A549 (cell line): ENCODE measurements at regions of chr4 and their contacts with region 1.

Region 1: DNA sequence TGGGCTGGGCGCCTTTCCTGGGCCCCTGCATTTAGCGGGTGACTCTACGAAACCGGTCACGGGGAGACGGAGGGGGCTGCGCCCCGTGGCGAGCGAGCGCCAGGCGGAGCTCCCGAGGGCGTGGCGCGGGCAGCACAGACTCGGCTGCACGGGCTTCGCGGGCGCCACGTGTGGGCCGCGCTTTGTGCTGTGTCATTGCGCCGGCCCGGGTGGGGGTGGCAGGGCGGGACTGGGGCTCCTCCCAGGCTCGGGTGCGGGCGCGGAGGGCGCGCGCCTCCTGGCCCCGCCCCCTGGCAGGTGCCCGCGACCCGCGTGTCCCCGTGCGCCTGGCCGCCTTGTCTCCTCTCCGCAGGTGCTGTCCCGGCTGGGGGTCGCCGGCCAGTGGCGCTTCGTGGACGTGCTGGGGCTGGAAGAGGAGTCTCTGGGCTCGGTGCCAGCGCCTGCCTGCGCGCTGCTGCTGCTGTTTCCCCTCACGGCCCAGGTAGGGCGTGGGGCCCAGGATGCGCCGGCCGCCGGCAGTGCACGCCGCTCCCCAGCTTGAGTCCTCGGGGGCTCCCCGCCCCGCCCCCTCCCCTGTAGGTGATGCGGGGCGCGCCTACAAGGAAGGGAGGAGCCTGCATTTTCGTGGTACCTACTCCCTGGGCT is 651 bp downstream of the UCHL1 start:
- DNase-seq: peak; percentile 24 to 79
- ATAC-seq: peak; percentile 74 to 84
- H3K4me3 ChIP-seq: peak overlapping the region; percentile 99
- H3K27ac ChIP-seq: peak overlapping the region; percentile 99
- H3K4me1 ChIP-seq: peaks cover 33% of the 10 kb centered on the region
- CTCF ChIP-seq: no peak
- EP300 ChIP-seq: no peak
- POLR2A ChIP-seq: no peak
- RAD21 ChIP-seq: no peak

Region 2: GRCh38 chr4:41245983-41246382 is 11.4 kb before region 1 on chr4:
- CTCF ChIA-PET with region 1: interaction called, 4 read pairs
- POLR2A ChIA-PET with region 1: interaction called, 22 read pairs
- DNase-seq: no peak
- ATAC-seq: no peak
- H3K4me3 ChIP-seq: no peak overlapping the region
- H3K27ac ChIP-seq: no peak overlapping the region
- H3K4me1 ChIP-seq: no peaks in the 10 kb centered on the region
- CTCF ChIP-seq: no peak
- EP300 ChIP-seq: no peak
- POLR2A ChIP-seq: no peak
- RAD21 ChIP-seq: no peak

Region 3: DNA sequence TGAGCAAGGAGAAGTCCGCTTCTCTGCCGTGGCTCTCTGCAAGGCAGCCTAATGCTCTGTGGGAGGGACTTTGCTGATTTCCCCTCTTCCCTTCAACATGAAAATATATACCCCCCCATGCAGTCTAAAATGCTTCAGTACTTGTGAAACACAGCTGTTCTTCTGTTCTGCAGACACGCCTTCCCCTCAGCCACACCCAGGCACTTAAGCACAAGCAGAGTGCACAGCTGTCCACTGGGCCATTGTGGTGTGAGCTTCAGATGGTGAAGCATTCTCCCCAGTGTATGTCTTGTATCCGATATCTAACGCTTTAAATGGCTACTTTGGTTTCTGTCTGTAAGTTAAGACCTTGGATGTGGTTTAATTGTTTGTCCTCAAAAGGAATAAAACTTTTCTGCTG is 10.6 kb after region 1 on chr4:
- CTCF ChIA-PET with region 1: interaction called, 5 read pairs
- POLR2A ChIA-PET with region 1: interaction called, 23 read pairs
- DNase-seq: no peak
- ATAC-seq: peak; percentile 23 to 47; a peak in 5 of 6 replicates
- H3K4me3 ChIP-seq: no peak overlapping the region
- H3K27ac ChIP-seq: no peak overlapping the region
- H3K4me1 ChIP-seq: no peaks in the 10 kb centered on the region
- CTCF ChIP-seq: no peak
- EP300 ChIP-seq: no peak
- POLR2A ChIP-seq: no peak
- RAD21 ChIP-seq: no peak